ENCODE measurements at regions of chr6 and their contacts with region 1.

Region 1: DNA sequence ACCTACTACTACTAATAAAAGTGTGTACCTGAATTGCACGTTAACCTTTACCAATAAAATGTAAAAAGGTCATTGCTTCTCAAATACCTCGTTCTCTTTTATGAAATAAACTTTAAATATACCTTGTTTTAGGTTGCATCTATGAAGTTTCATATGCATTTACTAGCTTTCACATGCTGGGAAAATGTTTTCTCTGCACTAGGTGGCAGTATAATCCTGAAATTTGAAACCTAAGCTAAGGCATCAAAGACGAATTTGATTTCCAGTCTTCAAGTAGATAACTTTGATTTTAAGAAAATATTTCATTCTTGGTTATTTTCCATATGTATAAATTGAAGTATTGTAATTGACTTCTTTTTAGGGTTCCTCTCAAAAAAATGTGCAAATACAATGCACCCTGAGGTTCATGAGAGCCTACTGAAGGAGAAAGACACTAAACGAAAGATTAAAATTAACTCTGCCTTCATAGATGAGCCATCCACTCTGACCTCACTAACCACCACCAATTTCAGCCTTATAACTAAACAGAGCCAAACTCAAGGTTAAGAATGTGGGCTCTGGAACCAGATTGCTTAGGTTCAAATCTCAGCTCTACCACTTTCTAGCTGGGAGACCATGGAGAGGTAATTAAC is 7.3 kb upstream of the COL9A1 start:
- DNase-seq: no peak
- ATAC-seq: no peak
- H3K4me3 Mint-ChIP-seq: no peak overlapping the region
- H3K27ac Mint-ChIP-seq: no peak overlapping the region
- H3K4me1 Mint-ChIP-seq: no peaks in the 10 kb centered on the region
- H3K27me3 Mint-ChIP-seq: no peaks in the 10 kb centered on the region; the same call in 1 of the 2 replicates
- CTCF ChIP-seq: peak; percentile 62

Region 2: DNA sequence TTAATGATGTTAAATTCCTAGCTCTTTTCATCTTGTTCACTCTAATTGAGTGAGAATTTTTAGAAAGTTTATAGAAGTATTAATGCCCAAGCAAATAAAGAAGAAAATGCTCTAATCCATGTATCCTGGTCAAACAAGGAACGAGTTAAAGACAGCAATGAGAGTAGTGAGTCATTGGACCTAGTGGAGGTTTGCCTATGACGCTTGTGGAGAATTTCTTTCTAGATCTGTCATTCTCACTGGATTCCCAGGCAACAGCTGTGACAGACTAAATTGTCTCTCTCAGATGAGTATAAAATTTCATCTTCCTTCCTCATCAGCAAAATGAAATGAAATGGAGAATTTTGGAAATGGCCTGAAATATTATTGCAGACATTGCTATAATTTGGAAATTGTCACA is 315.9 kb before region 1 on chr6:
- CTCF ChIA-PET with region 1: no interaction called
- POLR2A ChIA-PET with region 1: no interaction called
- DNase-seq: no peak
- ATAC-seq: no peak
- H3K4me3 Mint-ChIP-seq: no peak overlapping the region
- H3K27ac Mint-ChIP-seq: no peak overlapping the region
- H3K4me1 Mint-ChIP-seq: no peaks in the 10 kb centered on the region; the same call in 1 of the 2 replicates
- H3K27me3 Mint-ChIP-seq: no peaks in the 10 kb centered on the region
- CTCF ChIP-seq: no peak

Region 3: DNA sequence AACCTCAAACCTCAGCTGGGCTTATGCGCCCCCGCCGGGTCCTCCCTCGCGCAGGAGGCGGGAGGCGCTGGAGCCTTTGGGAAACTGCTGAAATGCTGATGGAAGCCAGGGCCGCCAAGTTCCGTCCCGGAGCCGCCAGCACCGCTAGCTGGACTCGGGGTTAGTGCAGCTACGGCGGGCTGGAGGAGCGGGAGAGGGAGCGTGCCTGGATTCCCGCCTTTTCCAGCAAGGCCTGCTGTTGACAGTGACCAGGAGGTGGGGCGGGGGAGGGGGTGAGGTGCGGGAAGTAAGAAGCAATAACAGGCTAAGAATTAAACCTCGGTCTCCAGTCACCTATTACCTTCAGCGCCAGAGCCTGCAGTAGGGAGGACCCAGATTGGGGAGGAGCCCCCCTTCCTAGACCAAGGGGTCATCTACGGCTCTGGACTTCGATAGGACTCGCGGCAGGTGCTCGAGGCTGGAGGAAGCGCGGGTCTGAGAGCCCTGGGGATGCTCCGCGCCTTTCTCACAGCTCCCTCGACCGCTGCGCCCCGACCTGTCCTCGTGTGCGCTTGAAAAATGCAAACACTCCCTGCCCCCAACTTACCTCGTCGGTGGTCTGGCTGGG is 27.8 kb before region 1 on chr6:
- CTCF ChIA-PET with region 1: interaction called, 18 read pairs
- POLR2A ChIA-PET with region 1: no interaction called
- DNase-seq: peak; percentile 61
- ATAC-seq: peak; percentile 56
- H3K4me3 Mint-ChIP-seq: peak overlapping the region; percentile 78
- H3K27ac Mint-ChIP-seq: no peak overlapping the region
- H3K4me1 Mint-ChIP-seq: peaks cover 24% of the 10 kb centered on the region
- H3K27me3 Mint-ChIP-seq: peaks cover 58% of the 10 kb centered on the region
- CTCF ChIP-seq: no peak

Region 4: DNA sequence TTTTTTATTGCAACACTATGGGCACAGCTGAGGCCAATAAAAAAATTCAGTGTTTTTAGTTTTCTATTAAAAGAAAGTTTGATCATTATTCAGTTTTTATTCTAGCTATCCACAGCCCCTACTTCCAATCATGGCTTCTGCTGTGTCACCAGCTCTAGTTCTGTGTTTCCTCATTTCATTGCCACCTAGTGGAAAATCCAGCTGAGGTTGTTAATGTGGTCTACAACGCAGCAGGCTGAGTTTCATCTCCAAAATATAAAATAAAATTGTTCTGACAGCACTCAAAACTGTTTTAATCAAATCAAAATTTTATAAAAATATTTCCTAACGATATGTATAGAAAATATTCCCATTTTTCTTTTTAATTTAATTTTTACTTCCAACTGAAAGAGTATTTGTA is 20.9 kb before region 1 on chr6:
- CTCF ChIA-PET with region 1: interaction called, 20 read pairs
- POLR2A ChIA-PET with region 1: no interaction called
- DNase-seq: no peak
- ATAC-seq: peak; percentile 61
- H3K4me3 Mint-ChIP-seq: no peak overlapping the region
- H3K27ac Mint-ChIP-seq: no peak overlapping the region
- H3K4me1 Mint-ChIP-seq: no peaks in the 10 kb centered on the region
- H3K27me3 Mint-ChIP-seq: peaks cover 11% of the 10 kb centered on the region
- CTCF ChIP-seq: no peak

Region 5: DNA sequence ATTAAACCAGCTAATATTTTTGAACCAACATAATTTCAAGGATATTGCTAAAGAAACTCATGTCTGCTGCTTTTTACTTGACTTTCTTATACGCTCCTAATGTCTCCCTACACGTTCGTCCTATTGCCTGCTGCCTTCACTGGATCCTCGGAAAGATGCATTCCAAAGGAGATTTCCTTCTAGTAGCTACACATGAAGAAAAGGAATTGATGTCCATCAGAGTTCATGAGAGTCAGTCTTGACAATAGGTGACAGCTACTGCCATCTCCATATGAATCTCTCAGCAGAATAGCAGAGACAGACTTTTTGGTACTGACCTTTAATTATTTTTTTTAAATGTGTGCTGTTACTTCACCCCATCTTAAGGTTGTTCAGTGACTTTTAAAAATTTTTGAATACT is 16.9 kb after region 1 on chr6:
- CTCF ChIA-PET with region 1: interaction called, 11 read pairs
- POLR2A ChIA-PET with region 1: no interaction called
- DNase-seq: no peak
- ATAC-seq: no peak
- H3K4me3 Mint-ChIP-seq: no peak overlapping the region
- H3K27ac Mint-ChIP-seq: no peak overlapping the region
- H3K4me1 Mint-ChIP-seq: no peaks in the 10 kb centered on the region
- H3K27me3 Mint-ChIP-seq: no peaks in the 10 kb centered on the region
- CTCF ChIP-seq: no peak

Region 6: GRCh38 chr6:70369332-70369950 is 59.3 kb after region 1 on chr6:
- CTCF ChIA-PET with region 1: interaction called, 128 read pairs
- POLR2A ChIA-PET with region 1: no interaction called
- DNase-seq: peak; percentile 73
- ATAC-seq: peak; percentile 98
- H3K4me3 Mint-ChIP-seq: no peak overlapping the region
- H3K27ac Mint-ChIP-seq: no peak overlapping the region
- H3K4me1 Mint-ChIP-seq: no peaks in the 10 kb centered on the region
- H3K27me3 Mint-ChIP-seq: no peaks in the 10 kb centered on the region
- CTCF ChIP-seq: peak; percentile 89

Region 7: DNA sequence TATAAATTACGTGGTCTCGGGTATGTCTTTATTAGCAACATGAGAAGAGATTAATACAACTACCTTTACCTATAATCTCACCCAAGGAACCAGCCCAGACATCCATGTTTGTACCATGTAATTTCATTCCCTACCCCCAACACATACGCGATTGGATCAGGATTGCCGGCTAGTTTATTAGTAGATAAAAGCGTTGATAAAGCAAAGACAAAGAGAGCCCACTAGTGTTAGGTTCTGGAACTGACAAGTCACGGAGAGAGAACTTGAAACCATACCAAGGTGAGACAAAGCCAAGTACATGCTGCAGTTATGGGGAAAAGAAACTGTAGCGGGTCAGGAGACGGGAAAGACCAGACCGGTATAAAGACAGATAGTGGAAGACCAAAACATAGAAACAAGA is 65.7 kb after region 1 on chr6:
- CTCF ChIA-PET with region 1: interaction called, 128 read pairs
- POLR2A ChIA-PET with region 1: no interaction called
- DNase-seq: no peak
- ATAC-seq: peak; percentile 87
- H3K4me3 Mint-ChIP-seq: no peak overlapping the region
- H3K27ac Mint-ChIP-seq: no peak overlapping the region
- H3K4me1 Mint-ChIP-seq: peaks cover 6% of the 10 kb centered on the region
- H3K27me3 Mint-ChIP-seq: no peaks in the 10 kb centered on the region
- CTCF ChIP-seq: peak; percentile 31; the same call in 1 of the 2 replicates